Mammary epithelial cell (primary cell): ENCODE measurements at regions of chr9 and their contacts with region 1.

Region 1: GRCh38 chr9:87713278-87713987 is 12.5 kb upstream of the CTSL start:
- DNase-seq: peak; percentile 92
- H3K4me3 ChIP-seq: no peak overlapping the region
- H3K27ac ChIP-seq: peak overlapping the region; percentile 68
- H3K4me1 ChIP-seq: peaks cover 33% of the 10 kb centered on the region
- H3K27me3 ChIP-seq: no peaks in the 10 kb centered on the region
- CTCF ChIP-seq: no peak

Region 2: GRCh38 chr9:87615547-87616148 is 97.8 kb before region 1 on chr9:
- CTCF ChIA-PET with region 1: no interaction called
- dilution Hi-C with region 1: loop called (anchors 5 kb)
- in situ Hi-C with region 1: no loop called
- intact Hi-C with region 1: no loop called
- DNase-seq: peak; percentile 80
- H3K4me3 ChIP-seq: no peak overlapping the region
- H3K27ac ChIP-seq: peak overlapping the region; percentile 3
- H3K4me1 ChIP-seq: peaks cover 16% of the 10 kb centered on the region
- H3K27me3 ChIP-seq: no peaks in the 10 kb centered on the region
- CTCF ChIP-seq: no peak

Region 3: GRCh38 chr9:87635656-87636501 is 77.6 kb before region 1 on chr9:
- CTCF ChIA-PET with region 1: no interaction called
- dilution Hi-C with region 1: no loop called
- in situ Hi-C with region 1: no loop called
- intact Hi-C with region 1: no loop called
- DNase-seq: no peak
- H3K4me3 ChIP-seq: no peak overlapping the region
- H3K27ac ChIP-seq: no peak overlapping the region
- H3K4me1 ChIP-seq: no peaks in the 10 kb centered on the region
- H3K27me3 ChIP-seq: no peaks in the 10 kb centered on the region
- CTCF ChIP-seq: no peak

Region 4: DNA sequence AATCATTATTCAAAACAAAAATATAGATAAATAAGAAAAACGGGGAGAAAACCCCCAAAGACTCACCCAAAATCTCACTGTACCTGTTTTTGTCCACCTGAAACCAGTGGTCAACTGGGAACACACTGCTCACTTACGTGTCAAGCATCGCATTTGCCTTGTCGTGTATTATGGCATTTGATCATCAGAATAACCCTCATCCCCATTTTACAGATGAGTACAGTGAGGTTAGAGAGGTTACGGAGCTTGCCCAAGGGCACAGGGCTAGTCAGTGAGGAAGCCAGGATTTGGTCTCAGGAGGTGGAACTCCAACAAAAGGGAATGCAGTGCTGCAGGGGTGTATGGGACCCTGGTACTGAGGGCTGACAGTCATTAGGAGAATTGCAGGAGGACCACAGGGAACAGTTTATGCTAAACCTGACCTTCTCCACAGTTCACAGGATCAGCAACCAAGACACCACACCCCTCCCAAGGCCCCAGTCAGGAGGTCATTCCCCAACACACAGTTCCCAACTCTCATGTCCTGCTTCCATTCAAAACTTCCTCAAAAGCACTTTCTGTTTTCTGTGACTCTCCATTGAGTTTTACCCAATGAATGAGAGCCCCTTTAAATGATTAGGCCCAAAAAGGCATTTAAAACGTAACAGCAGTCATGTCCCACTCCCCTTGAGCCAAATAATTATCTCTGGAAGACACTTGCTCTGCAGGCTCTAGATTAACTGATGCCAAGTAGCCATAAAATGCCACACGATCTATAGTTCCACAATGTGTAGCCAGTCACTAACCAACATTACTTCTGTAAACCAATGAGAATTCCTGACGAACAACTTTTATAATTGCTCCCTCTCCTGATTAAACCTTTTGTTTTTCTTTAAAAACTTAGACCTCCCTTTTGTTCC is 63.3 kb after region 1 on chr9:
- CTCF ChIA-PET with region 1: no interaction called
- dilution Hi-C with region 1: loop called (anchors 5 kb)
- in situ Hi-C with region 1: no loop called
- intact Hi-C with region 1: no loop called
- DNase-seq: no peak
- H3K4me3 ChIP-seq: no peak overlapping the region
- H3K27ac ChIP-seq: no peak overlapping the region
- H3K4me1 ChIP-seq: no peaks in the 10 kb centered on the region
- H3K27me3 ChIP-seq: no peaks in the 10 kb centered on the region
- CTCF ChIP-seq: no peak

Region 5: GRCh38 chr9:88534456-88535261 is 821.2 kb after region 1 on chr9 and contains the start of gene NXNL2:
- CTCF ChIA-PET with region 1: no interaction called
- dilution Hi-C with region 1: no loop called
- in situ Hi-C with region 1: no loop called
- intact Hi-C with region 1: no loop called
- DNase-seq: peak; percentile 56
- H3K4me3 ChIP-seq: peak within 1 kb of the TSS; percentile 55 to 70 (median 64)
- H3K27ac ChIP-seq: no peak within 1 kb of the TSS
- H3K4me1 ChIP-seq: peaks cover 20% of the 10 kb centered on the region
- H3K27me3 ChIP-seq: no peaks in the 10 kb centered on the region
- CTCF ChIP-seq: no peak
- total RNA-seq, gene NXNL2: 0.31 to 1.0 TPM